ENCODE measurements at regions of chr7 and their contacts with region 1.

Region 1: GRCh38 chr7:98733036-98733435 is 116.0 kb downstream of the NPTX2 start:
- DNase-seq: peak in 1 of 2 experiments; percentile 56
- H3K4me3 ChIP-seq: no peak overlapping the region
- H3K27ac ChIP-seq: no peak overlapping the region
- H3K4me1 ChIP-seq: no peaks in the 10 kb centered on the region
- H3K27me3 ChIP-seq: peaks cover 53% of the 10 kb centered on the region
- CTCF ChIP-seq: peak; percentile 73

Region 2: GRCh38 chr7:98539879-98540278 is 193.2 kb before region 1 on chr7:
- CTCF ChIA-PET with region 1: no interaction called
- POLR2A ChIA-PET with region 1: interaction called, 17 read pairs
- intact Hi-C with region 1: no loop called
- DNase-seq: no peak
- H3K4me3 ChIP-seq: no peak overlapping the region
- H3K27ac ChIP-seq: no peak overlapping the region
- H3K4me1 ChIP-seq: no peaks in the 10 kb centered on the region
- H3K27me3 ChIP-seq: peaks cover 81% of the 10 kb centered on the region
- CTCF ChIP-seq: no peak

Measured in PC-9 (cell line).